GM12878 (cell line): ENCODE measurements at regions of chr9 and their contacts with region 1.

Region 1: GRCh38 chr9:124617471-124618141 is 110.4 kb upstream of the NR5A1 start:
- DNase-seq: peak; percentile 56
- ATAC-seq: peak; percentile 79
- H3K4me3 ChIP-seq: no peak overlapping the region
- H3K27ac ChIP-seq: no peak overlapping the region
- H3K4me1 ChIP-seq: peaks cover 15% of the 10 kb centered on the region; the same call in 1 of the 2 replicates
- H3K27me3 ChIP-seq: no peaks in the 10 kb centered on the region
- CTCF ChIP-seq: peak; percentile 90 to 95 (median 94); a peak in 5 of 6 replicates
- EP300 ChIP-seq: no peak
- POLR2A ChIP-seq: no peak
- RAD21 ChIP-seq: peak; percentile 99

Region 2: GRCh38 chr9:124537926-124538325 is 79.7 kb before region 1 on chr9:
- CTCF ChIA-PET with region 1: interaction called, 12 read pairs
- POLR2A ChIA-PET with region 1: no interaction called
- RAD21 ChIA-PET with region 1: interaction called, 3 read pairs
- SMC1A ChIA-PET with region 1: interaction called, 4 read pairs
- in situ Hi-C with region 1: no loop called
- intact Hi-C with region 1: no loop called
- DNase-seq: no peak
- ATAC-seq: no peak
- H3K4me3 ChIP-seq: no peak overlapping the region
- H3K27ac ChIP-seq: no peak overlapping the region
- H3K4me1 ChIP-seq: no peaks in the 10 kb centered on the region
- H3K27me3 ChIP-seq: no peaks in the 10 kb centered on the region
- CTCF ChIP-seq: no peak
- EP300 ChIP-seq: no peak
- POLR2A ChIP-seq: no peak
- RAD21 ChIP-seq: no peak

Region 3: GRCh38 chr9:124635285-124635684 is 17.7 kb after region 1 on chr9:
- CTCF ChIA-PET with region 1: interaction called, 30 read pairs
- POLR2A ChIA-PET with region 1: interaction called, 6 read pairs
- RAD21 ChIA-PET with region 1: interaction called, 6 read pairs
- SMC1A ChIA-PET with region 1: interaction called, 56 read pairs
- in situ Hi-C with region 1: no loop called
- intact Hi-C with region 1: loop called (anchors 2 kb)
- DNase-seq: no peak
- ATAC-seq: no peak
- H3K4me3 ChIP-seq: no peak overlapping the region
- H3K27ac ChIP-seq: no peak overlapping the region
- H3K4me1 ChIP-seq: no peaks in the 10 kb centered on the region
- H3K27me3 ChIP-seq: no peaks in the 10 kb centered on the region
- CTCF ChIP-seq: no peak
- EP300 ChIP-seq: no peak
- POLR2A ChIP-seq: no peak
- RAD21 ChIP-seq: no peak

Region 4: DNA sequence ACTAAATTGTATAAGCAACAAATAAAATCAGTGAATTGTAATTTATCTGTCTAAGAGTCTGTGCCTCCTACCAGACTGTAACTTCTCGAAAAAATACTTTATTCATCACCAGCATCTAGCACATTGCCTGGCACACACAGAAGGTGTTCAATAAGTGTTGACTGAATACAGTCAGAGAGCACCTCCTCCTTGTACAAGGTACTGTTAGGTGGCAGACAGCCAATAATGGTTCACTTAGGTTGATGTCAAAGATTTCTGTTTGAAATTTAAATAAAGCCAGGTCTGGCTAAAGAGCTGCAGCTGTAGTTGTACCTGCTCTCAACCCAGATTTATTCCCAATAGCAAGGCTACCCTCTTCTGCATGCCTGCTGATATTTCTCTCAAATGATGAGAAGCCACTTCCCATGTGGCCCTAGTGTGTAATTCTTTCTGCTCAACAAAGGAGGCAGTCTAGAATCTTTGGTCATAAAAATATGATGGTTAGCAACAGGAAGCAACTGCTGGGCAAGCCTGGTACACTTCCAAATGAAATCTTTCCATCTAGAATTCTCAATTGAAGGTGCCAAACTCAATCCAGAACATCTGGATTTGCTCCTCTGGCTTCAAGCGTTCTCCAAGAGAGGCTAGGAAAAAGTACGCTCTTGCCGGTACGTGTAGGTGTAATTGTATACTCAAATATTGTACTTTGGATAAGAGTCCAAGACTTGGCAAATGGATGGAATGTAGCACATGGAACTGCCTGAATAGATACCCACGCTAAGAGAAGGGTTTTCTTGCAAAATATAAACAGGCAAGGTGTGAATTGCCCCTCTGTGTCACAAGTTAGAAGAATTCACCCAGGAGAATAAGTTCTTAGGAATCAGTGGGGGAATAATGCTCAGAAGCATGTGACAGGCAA is 57.9 kb after region 1 on chr9:
- CTCF ChIA-PET with region 1: interaction called, 13 read pairs
- POLR2A ChIA-PET with region 1: interaction called, 4 read pairs
- RAD21 ChIA-PET with region 1: interaction called, 22 read pairs
- SMC1A ChIA-PET with region 1: interaction called, 25 read pairs
- in situ Hi-C with region 1: no loop called
- intact Hi-C with region 1: no loop called
- DNase-seq: no peak
- ATAC-seq: peak; percentile 31; the same call in 1 of the 3 replicates
- H3K4me3 ChIP-seq: no peak overlapping the region
- H3K27ac ChIP-seq: no peak overlapping the region
- H3K4me1 ChIP-seq: peaks cover 5% of the 10 kb centered on the region; the same call in 1 of the 2 replicates
- H3K27me3 ChIP-seq: no peaks in the 10 kb centered on the region
- CTCF ChIP-seq: 0 out of 6 replicates have a peak, but pooled peaks of 2 of the 3 experiments have one; percentile 1 to 9
- EP300 ChIP-seq: no peak
- POLR2A ChIP-seq: no peak
- RAD21 ChIP-seq: no peak

Region 5: GRCh38 chr9:124721109-124721906 is 103.7 kb after region 1 on chr9:
- CTCF ChIA-PET with region 1: interaction called, 424 read pairs
- POLR2A ChIA-PET with region 1: no interaction called
- RAD21 ChIA-PET with region 1: interaction called, 12 read pairs
- SMC1A ChIA-PET with region 1: interaction called, 320 read pairs
- in situ Hi-C with region 1: no loop called
- intact Hi-C with region 1: no loop called
- DNase-seq: no peak
- ATAC-seq: no peak
- H3K4me3 ChIP-seq: no peak overlapping the region
- H3K27ac ChIP-seq: no peak overlapping the region
- H3K4me1 ChIP-seq: no peaks in the 10 kb centered on the region
- H3K27me3 ChIP-seq: no peaks in the 10 kb centered on the region
- CTCF ChIP-seq: no peak
- EP300 ChIP-seq: no peak
- POLR2A ChIP-seq: no peak
- RAD21 ChIP-seq: no peak

Region 6: DNA sequence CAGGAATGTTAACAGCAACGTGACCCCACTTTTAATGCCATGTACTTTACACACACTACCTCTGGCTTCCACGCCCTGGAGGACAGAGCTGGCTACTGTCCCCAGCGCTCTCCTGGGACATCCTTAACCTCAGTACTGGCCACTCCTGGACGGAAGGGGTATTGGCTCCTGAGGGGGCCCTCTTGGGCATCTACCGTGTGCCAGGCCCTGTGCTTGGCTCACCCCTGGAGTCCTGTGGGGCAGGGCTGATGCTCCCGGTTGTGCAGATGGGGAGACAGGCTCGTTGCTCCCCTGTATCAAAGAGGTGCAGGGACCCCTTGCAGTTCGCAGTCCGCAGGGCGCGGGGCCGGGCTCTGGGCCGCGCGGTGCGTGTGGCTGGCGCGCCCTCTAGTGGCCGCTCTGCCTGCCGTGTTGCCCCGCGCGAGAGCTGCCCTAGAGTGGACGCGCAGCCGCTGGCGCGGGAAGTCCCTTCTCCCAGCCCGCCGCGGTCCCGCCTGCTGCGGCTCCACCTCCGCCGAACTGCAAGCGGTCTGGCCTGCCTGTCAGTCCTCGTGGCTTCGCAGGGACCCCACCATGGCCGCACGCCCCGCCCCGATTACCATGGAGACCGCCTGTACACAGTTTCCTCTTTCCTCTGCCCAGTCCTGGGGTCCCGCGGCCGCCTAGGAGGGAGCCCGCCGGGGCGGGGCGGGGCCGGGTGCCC is 235.4 kb after region 1 on chr9 and contains the start of gene WDR38:
- CTCF ChIA-PET with region 1: interaction called, 14 read pairs
- POLR2A ChIA-PET with region 1: no interaction called
- RAD21 ChIA-PET with region 1: interaction called, 9 read pairs
- SMC1A ChIA-PET with region 1: interaction called, 9 read pairs
- in situ Hi-C with region 1: loop called (anchors 5 kb)
- intact Hi-C with region 1: loop called (anchors 5 kb)
- DNase-seq: no peak
- ATAC-seq: peak; percentile 91
- H3K4me3 ChIP-seq: peak within 1 kb of the TSS; percentile 51; the same call in 1 of the 2 replicates
- H3K27ac ChIP-seq: no peak within 1 kb of the TSS
- H3K4me1 ChIP-seq: peaks cover 5% of the 10 kb centered on the region
- H3K27me3 ChIP-seq: no peaks in the 10 kb centered on the region
- CTCF ChIP-seq: peak; percentile 82 to 98 (median 87)
- EP300 ChIP-seq: no peak
- POLR2A ChIP-seq: no peak
- RAD21 ChIP-seq: peak; percentile 79
- polyA plus RNA-seq, gene WDR38: not detected